CD4-positive, alpha-beta memory T cell (primary cell): ENCODE measurements at regions of chr6 and their contacts with region 1.

Region 1: DNA sequence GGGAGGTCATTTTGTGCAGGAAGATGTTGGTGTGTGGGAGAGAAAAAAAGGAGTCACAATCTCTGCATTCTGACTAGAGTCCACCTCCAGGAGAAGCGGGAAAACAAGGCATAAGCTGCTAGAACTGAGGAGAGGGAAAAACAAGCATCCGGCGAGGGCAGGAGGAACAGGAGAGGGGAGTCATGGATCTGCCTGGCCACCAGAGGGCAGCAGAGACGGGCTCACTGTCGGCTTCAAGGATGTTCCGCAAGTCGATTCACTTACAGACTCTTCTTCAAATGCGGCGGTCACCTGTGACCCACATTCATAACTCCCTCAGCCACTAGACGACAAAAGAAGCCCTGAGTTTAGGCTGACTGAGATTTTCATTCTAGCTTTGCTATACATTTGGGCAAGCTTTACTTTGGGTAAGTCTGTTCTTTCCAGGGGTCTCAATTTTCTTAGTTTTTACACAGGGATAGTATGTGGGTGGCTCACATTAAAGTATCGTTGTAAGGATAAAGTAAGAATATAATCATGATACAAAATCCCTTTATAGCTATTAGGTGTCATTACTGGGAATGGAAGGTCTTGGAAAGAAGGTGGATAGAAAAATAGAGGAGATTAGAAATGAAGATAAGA is 6.6 kb upstream of the BTNL2 start:
- DNase-seq: peak; percentile 79 to 82 (median 80)
- H3K4me3 ChIP-seq: no peak overlapping the region
- H3K4me3 Mint-ChIP-seq: no peak overlapping the region
- H3K27ac ChIP-seq: no peak overlapping the region
- H3K27ac Mint-ChIP-seq: peak overlapping the region in 1 of 7 donors; percentile 43
- H3K4me1 ChIP-seq: peaks cover 3% of the 10 kb centered on the region
- H3K4me1 Mint-ChIP-seq: peaks cover 5 to 12% (median 8%) of the 10 kb centered on the region in 4 donors
- H3K27me3 ChIP-seq: peaks cover 16% of the 10 kb centered on the region
- H3K27me3 Mint-ChIP-seq: peaks cover 26 to 39% of the 10 kb centered on the region in 2 donors

Region 2: GRCh38 chr6:31739639-31740396 is 673.7 kb before region 1 on chr6 and contains the start of gene MSH5:
- CTCF ChIA-PET with region 1: no interaction called
- POLR2A ChIA-PET with region 1: no interaction called
- intact Hi-C with region 1: no loop called
- DNase-seq: peak; percentile 92 to 97 (median 94)
- H3K4me3 ChIP-seq: peak within 1 kb of the TSS; percentile 82
- H3K4me3 Mint-ChIP-seq: peak within 1 kb of the TSS; percentile 89 to 99 (median 98)
- H3K27ac ChIP-seq: peak within 1 kb of the TSS; percentile 64
- H3K27ac Mint-ChIP-seq: peak within 1 kb of the TSS; percentile 94 to 97 (median 95)
- H3K4me1 ChIP-seq: peaks cover 42% of the 10 kb centered on the region
- H3K4me1 Mint-ChIP-seq: peaks cover 33 to 64% (median 51%) of the 10 kb centered on the region in 4 donors
- H3K27me3 ChIP-seq: no peaks in the 10 kb centered on the region
- H3K27me3 Mint-ChIP-seq: no peaks in the 10 kb centered on the region
- total RNA-seq, gene MSH5: 11.4 to 12.1 TPM

Region 3: DNA sequence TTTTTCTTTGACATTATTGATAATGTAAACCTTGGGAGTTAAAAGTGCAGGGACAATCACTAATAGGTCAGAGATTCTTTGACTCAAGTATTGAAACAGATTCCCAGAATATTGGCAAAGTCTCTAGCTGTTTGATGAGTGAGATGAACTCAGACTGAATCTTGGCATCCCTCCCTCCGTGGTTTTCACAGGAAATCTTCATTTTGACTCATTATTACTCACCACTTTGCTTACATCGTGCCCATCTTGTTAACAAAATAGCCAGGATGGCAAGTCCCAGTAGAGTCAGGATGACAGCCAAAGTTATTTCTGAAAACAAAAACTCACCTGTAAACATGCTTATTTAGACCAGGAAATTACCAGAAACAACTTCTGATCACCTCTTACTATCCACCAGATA is 43.9 kb before region 1 on chr6:
- CTCF ChIA-PET with region 1: no interaction called
- POLR2A ChIA-PET with region 1: no interaction called
- intact Hi-C with region 1: no loop called
- DNase-seq: no peak
- H3K4me3 ChIP-seq: no peak overlapping the region
- H3K4me3 Mint-ChIP-seq: no peak overlapping the region
- H3K27ac ChIP-seq: no peak overlapping the region
- H3K27ac Mint-ChIP-seq: no peak overlapping the region
- H3K4me1 ChIP-seq: no peaks in the 10 kb centered on the region
- H3K4me1 Mint-ChIP-seq: no peaks in the 10 kb centered on the region
- H3K27me3 ChIP-seq: peaks cover 5% of the 10 kb centered on the region
- H3K27me3 Mint-ChIP-seq: peaks cover 30% of the 10 kb centered on the region in 2 donors

Region 4: GRCh38 chr6:32402812-32403211 is 10.7 kb before region 1 on chr6:
- CTCF ChIA-PET with region 1: interaction called, 41 read pairs
- POLR2A ChIA-PET with region 1: no interaction called
- intact Hi-C with region 1: no loop called
- DNase-seq: no peak
- H3K4me3 ChIP-seq: no peak overlapping the region
- H3K4me3 Mint-ChIP-seq: no peak overlapping the region
- H3K27ac ChIP-seq: no peak overlapping the region
- H3K27ac Mint-ChIP-seq: no peak overlapping the region
- H3K4me1 ChIP-seq: no peaks in the 10 kb centered on the region
- H3K4me1 Mint-ChIP-seq: no peaks in the 10 kb centered on the region
- H3K27me3 ChIP-seq: peaks cover 11% of the 10 kb centered on the region
- H3K27me3 Mint-ChIP-seq: peaks cover 34 to 43% of the 10 kb centered on the region in 2 donors

Region 5: DNA sequence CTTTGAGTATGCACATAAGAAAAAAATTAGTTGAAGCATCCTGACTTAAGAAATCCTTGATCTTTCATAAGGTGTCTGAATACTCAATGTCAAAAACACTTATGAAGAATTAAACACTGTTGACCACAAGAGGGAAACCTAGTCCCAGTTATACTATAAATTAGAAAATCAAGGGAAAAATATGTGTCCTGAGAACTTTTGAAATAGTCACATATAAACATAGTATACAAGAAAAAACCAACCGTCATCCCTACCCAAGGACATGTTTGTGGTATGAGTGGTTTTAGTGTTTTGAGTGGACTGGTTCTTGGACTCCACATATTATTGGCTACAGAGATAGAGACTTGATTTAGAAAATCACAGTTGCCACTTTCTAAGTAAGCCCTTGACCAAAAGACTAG is 18.5 kb after region 1 on chr6:
- CTCF ChIA-PET with region 1: interaction called, 5 read pairs
- POLR2A ChIA-PET with region 1: no interaction called
- intact Hi-C with region 1: loop called (anchors 2 kb)
- DNase-seq: peak in 4 of 5 donors; percentile 28 to 41 (median 36)
- H3K4me3 ChIP-seq: no peak overlapping the region
- H3K4me3 Mint-ChIP-seq: no peak overlapping the region
- H3K27ac ChIP-seq: no peak overlapping the region
- H3K27ac Mint-ChIP-seq: no peak overlapping the region
- H3K4me1 ChIP-seq: no peaks in the 10 kb centered on the region
- H3K4me1 Mint-ChIP-seq: no peaks in the 10 kb centered on the region
- H3K27me3 ChIP-seq: peaks cover 4% of the 10 kb centered on the region
- H3K27me3 Mint-ChIP-seq: peaks cover 5 to 11% of the 10 kb centered on the region in 2 donors

Region 6: DNA sequence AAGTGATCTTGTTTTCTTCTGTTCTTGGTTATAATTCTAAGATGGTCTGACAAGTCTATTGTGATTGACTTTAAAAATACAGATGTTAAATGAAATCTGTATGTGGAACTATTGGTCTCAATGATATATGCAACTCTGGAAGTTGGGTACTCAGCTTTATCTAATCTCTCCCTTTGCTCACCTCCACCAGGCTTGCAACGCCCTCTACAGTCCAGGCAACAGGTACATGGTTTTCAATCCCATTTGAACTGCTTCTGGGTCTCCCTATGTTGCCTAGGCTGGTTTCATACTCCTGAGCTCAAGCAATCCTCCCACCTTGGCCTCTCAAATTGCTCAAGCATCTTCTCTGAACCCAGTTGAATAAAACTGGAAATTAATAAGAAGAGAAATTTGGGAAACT is 278.5 kb after region 1 on chr6:
- CTCF ChIA-PET with region 1: interaction called, 13 read pairs
- POLR2A ChIA-PET with region 1: no interaction called
- intact Hi-C with region 1: loop called (anchors 2 kb)
- DNase-seq: peak; percentile 39 to 72 (median 65)
- H3K4me3 ChIP-seq: no peak overlapping the region
- H3K4me3 Mint-ChIP-seq: no peak overlapping the region
- H3K27ac ChIP-seq: no peak overlapping the region
- H3K27ac Mint-ChIP-seq: no peak overlapping the region
- H3K4me1 ChIP-seq: peaks cover 16% of the 10 kb centered on the region
- H3K4me1 Mint-ChIP-seq: peaks cover 5 to 15% (median 11%) of the 10 kb centered on the region in 4 donors
- H3K27me3 ChIP-seq: no peaks in the 10 kb centered on the region
- H3K27me3 Mint-ChIP-seq: peaks cover 22 to 31% of the 10 kb centered on the region in 2 donors

Region 7: GRCh38 chr6:32713241-32713640 is 299.7 kb after region 1 on chr6:
- CTCF ChIA-PET with region 1: interaction called, 14 read pairs
- POLR2A ChIA-PET with region 1: no interaction called
- intact Hi-C with region 1: no loop called
- DNase-seq: no peak
- H3K4me3 ChIP-seq: no peak overlapping the region
- H3K4me3 Mint-ChIP-seq: no peak overlapping the region
- H3K27ac ChIP-seq: no peak overlapping the region
- H3K27ac Mint-ChIP-seq: no peak overlapping the region
- H3K4me1 ChIP-seq: no peaks in the 10 kb centered on the region
- H3K4me1 Mint-ChIP-seq: no peaks in the 10 kb centered on the region
- H3K27me3 ChIP-seq: no peaks in the 10 kb centered on the region
- H3K27me3 Mint-ChIP-seq: peaks cover 7 to 10% of the 10 kb centered on the region in 2 donors

Region 8: DNA sequence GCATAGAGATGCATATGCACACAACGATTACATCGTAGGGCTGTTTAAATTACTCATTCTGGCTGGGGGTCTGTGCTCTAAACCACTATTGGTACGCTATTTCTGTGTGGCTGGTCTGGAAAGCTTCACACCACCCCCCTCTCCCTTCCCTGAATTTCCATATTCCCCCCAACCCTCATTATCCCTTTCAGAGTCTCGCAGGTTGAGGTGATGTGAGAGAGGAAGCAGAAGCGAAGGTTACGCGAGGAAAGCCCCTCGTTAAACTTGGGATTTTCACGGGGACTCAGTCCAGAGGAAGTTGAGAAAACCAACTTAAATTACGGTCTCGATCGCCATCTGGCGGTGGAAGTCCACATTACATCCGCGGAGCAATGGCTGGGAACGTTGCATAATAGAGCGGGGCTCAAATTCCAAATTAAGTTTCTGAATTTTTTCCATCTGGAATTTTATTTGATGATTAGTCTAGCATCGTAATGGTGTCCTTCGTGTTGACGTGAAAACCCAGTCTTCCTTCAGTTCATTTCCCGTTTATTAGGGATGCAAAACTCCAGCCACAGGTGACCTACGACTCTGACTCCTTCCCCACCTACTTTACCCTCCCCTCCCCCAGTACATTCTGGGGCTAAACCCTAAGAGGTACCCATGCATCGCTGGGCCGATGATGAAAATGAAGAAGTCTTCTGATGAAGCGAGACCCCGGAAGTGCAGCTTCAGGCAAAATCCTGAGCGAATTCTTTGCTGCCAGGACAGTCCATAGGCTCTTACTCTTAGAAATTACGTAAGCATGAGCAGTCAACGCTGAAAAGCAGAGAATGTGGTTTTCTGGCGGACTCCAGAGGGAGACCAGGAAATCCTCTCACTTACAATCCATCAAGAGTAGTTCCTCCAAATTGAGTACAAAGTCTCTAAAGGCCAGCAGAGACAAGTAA is 383.6 kb after region 1 on chr6:
- CTCF ChIA-PET with region 1: interaction called, 21 read pairs
- POLR2A ChIA-PET with region 1: no interaction called
- intact Hi-C with region 1: loop called (anchors 1 kb)
- DNase-seq: peak; percentile 60 to 71 (median 65)
- H3K4me3 ChIP-seq: no peak overlapping the region
- H3K4me3 Mint-ChIP-seq: peak overlapping the region in 7 of 8 donors; percentile 33 to 79 (median 65)
- H3K27ac ChIP-seq: no peak overlapping the region
- H3K27ac Mint-ChIP-seq: no peak overlapping the region
- H3K4me1 ChIP-seq: peaks cover 9% of the 10 kb centered on the region
- H3K4me1 Mint-ChIP-seq: peaks cover 10 to 20% (median 13%) of the 10 kb centered on the region in 4 donors
- H3K27me3 ChIP-seq: peaks cover 23% of the 10 kb centered on the region
- H3K27me3 Mint-ChIP-seq: peaks cover 41 to 63% of the 10 kb centered on the region in 2 donors